ENCODE measurements at regions of chr4 and their contacts with region 1.

Region 1: DNA sequence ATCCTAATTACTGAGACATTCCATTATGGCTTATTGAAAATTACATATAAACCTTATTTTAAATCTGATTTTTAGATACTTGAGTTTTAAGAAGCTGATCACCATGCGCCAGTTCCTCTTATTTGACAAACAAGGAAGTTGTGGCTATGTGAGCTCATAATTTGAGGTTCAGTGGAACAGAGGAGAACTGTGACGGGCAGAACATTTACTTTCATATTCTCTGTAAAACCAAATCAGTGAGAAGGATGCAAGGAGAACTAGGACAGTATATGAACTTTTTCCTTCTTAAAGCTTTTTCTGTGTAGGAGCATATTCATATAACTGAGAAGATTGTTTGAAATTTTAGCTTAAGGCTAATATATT is 25.3 kb downstream of the STIM2 start:
- DNase-seq: peak in 4 of 5 donors; percentile 12 to 78 (median 72)
- H3K4me3 ChIP-seq: peak overlapping the region; percentile 52
- H3K4me3 Mint-ChIP-seq: peak overlapping the region; percentile 77 to 83 (median 79)
- H3K27ac ChIP-seq: peak overlapping the region; percentile 64
- H3K27ac Mint-ChIP-seq: peak overlapping the region; percentile 81 to 100 (median 96)
- H3K4me1 ChIP-seq: peaks cover 60% of the 10 kb centered on the region
- H3K4me1 Mint-ChIP-seq: peaks cover 67 to 96% (median 93%) of the 10 kb centered on the region in 3 donors
- H3K27me3 ChIP-seq: no peaks in the 10 kb centered on the region
- H3K27me3 Mint-ChIP-seq: no peaks in the 10 kb centered on the region

Region 2: GRCh38 chr4:26583865-26584652 is 301.8 kb before region 1 on chr4 and contains the start of gene TBC1D19:
- CTCF ChIA-PET with region 1: interaction called, 3 read pairs
- POLR2A ChIA-PET with region 1: interaction called, 13 read pairs
- DNase-seq: peak; percentile 71 to 90 (median 86)
- H3K4me3 ChIP-seq: peak within 1 kb of the TSS; percentile 87
- H3K4me3 Mint-ChIP-seq: peak within 1 kb of the TSS; percentile 96 to 100 (median 97)
- H3K27ac ChIP-seq: peak within 1 kb of the TSS; percentile 99
- H3K27ac Mint-ChIP-seq: peak within 1 kb of the TSS; percentile 97 to 100 (median 99)
- H3K4me1 ChIP-seq: peaks cover 12% of the 10 kb centered on the region
- H3K4me1 Mint-ChIP-seq: peaks cover 35 to 48% (median 42%) of the 10 kb centered on the region in 3 donors
- H3K27me3 ChIP-seq: no peaks in the 10 kb centered on the region
- H3K27me3 Mint-ChIP-seq: peaks cover 4 to 8% of the 10 kb centered on the region in 2 donors
- total RNA-seq, gene TBC1D19: 4.4 to 6.3 TPM

Region 3: DNA sequence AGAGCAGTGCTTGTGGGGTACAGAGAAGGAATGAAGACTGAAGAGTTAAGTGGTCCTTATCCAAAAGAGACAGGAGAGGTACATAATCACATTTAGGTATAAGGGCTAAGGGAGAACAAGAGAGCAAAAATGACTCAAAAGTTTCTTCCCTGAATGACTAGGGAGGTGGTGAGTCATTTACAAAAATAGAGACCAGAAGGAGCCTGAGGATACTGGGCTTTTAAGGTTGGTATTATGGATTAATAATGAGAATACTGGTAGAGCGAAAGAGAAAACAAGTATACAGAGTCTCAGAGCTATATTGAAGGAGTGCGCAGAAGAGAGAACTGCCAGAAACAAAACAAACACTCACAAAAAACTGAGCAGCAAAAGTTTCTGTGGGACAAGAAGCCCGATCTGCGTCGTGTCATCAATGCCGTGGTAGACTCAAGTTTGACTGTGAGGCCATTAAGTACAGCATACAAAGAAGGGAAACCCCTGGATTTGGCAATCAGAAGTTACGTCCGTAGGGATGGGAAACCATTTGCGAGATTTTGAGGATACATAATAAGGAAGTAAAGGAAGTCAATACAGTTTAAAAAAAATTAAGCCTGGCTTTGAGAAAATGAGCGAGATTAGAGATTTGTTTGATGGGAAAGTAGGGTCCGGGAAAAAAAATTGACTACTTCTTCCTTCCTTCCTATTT is 154.4 kb before region 1 on chr4:
- CTCF ChIA-PET with region 1: no interaction called
- POLR2A ChIA-PET with region 1: no interaction called
- DNase-seq: no peak
- H3K4me3 ChIP-seq: no peak overlapping the region
- H3K4me3 Mint-ChIP-seq: no peak overlapping the region
- H3K27ac ChIP-seq: no peak overlapping the region
- H3K27ac Mint-ChIP-seq: peak overlapping the region in 1 of 8 donors; percentile 25
- H3K4me1 ChIP-seq: no peaks in the 10 kb centered on the region
- H3K4me1 Mint-ChIP-seq: no peaks in the 10 kb centered on the region
- H3K27me3 ChIP-seq: no peaks in the 10 kb centered on the region
- H3K27me3 Mint-ChIP-seq: no peaks in the 10 kb centered on the region

Region 4: DNA sequence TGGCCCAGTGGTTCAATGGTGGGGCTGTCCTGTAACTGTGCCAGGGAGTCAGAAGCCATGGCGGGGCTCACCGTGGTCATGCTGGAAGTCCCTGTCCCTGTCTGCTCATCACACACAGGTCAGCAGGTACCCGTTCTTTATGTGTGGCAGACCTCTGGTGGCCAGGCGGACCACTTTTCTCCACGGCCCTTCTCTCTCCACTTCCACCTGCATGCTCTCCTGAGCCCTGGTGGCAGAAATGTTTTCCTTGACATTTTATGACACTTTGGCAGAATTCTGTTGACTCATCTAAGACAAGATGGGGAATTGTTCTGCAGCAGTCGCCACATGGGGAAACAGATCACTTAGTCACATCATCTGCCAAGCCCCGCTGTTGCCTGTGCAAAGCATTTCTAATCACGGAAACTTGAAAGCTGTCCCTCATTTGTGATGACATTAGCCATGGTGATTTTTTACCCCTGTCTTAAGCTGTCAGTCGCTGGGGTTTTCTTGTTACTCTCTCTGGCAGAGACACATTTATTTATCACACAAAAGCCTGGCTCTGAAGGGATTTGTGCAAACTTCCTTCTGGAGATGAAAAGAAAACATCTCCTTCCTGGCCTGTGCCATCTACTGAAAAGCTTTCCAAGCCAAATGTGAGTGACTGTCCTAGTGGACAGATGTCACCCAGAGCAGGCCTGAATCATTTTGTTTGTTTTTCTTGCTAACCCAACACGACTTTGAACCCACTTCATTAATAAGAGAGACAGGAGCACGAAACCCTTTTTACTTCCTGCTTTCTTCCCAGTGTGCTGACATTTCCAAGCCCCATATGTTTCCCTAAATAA is 64.0 kb before region 1 on chr4:
- CTCF ChIA-PET with region 1: no interaction called
- POLR2A ChIA-PET with region 1: no interaction called
- DNase-seq: no peak
- H3K4me3 ChIP-seq: no peak overlapping the region
- H3K4me3 Mint-ChIP-seq: peak overlapping the region in 1 of 7 donors; percentile 61
- H3K27ac ChIP-seq: no peak overlapping the region
- H3K27ac Mint-ChIP-seq: no peak overlapping the region
- H3K4me1 ChIP-seq: peaks cover 13% of the 10 kb centered on the region
- H3K4me1 Mint-ChIP-seq: peaks cover 17 to 23% (median 20%) of the 10 kb centered on the region in 3 donors
- H3K27me3 ChIP-seq: no peaks in the 10 kb centered on the region
- H3K27me3 Mint-ChIP-seq: no peaks in the 10 kb centered on the region

Region 5: DNA sequence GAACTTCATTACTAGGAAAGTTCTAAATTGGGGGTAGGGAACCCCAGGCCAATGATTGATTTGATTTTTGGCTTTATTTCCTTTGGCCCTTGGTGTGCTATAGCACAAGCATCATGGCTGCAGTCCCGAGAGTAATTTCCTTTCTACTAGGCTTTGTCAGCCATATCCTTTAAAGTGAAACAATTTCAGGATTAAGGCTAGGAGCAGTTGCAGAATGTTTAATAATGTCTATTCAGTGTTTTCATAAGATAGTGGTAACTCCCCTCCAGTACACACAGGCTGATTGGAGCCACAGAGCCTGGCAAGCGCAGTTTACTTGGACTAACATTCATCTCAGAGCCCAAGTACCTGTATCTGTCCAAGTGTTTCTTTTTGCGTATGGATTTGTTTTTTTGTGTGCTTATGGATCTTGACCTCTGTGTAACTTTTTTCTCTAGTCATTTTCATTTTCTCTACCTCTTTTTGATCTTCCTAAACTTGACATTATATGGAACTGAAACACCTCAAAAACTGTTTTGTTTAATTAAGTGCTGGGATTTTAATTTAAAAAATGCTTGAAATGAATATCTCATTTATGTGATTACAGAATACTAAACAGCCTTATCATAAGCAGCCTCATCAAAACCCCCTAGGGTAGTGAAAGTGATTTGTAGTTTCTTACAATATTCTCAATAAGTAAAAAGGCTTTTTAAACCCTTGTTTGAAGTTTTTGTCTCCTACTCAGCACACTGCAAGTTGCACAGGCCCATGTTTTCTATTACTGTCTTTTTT is 17.8 kb before region 1 on chr4:
- CTCF ChIA-PET with region 1: interaction called, 20 read pairs
- POLR2A ChIA-PET with region 1: interaction called, 12 read pairs
- DNase-seq: no peak
- H3K4me3 ChIP-seq: no peak overlapping the region
- H3K4me3 Mint-ChIP-seq: peak overlapping the region in 6 of 7 donors; percentile 15 to 71 (median 46)
- H3K27ac ChIP-seq: no peak overlapping the region
- H3K27ac Mint-ChIP-seq: peak overlapping the region; percentile 8 to 89 (median 30)
- H3K4me1 ChIP-seq: peaks cover 86% of the 10 kb centered on the region
- H3K4me1 Mint-ChIP-seq: peaks cover 85 to 92% (median 91%) of the 10 kb centered on the region in 3 donors
- H3K27me3 ChIP-seq: no peaks in the 10 kb centered on the region
- H3K27me3 Mint-ChIP-seq: no peaks in the 10 kb centered on the region

Region 6: GRCh38 chr4:26873391-26874026 is 12.4 kb before region 1 on chr4:
- CTCF ChIA-PET with region 1: interaction called, 20 read pairs
- POLR2A ChIA-PET with region 1: interaction called, 11 read pairs
- DNase-seq: peak; percentile 61 to 90 (median 69)
- H3K4me3 ChIP-seq: no peak overlapping the region
- H3K4me3 Mint-ChIP-seq: peak overlapping the region; percentile 53 to 86 (median 72)
- H3K27ac ChIP-seq: peak overlapping the region; percentile 65
- H3K27ac Mint-ChIP-seq: peak overlapping the region; percentile 88 to 99 (median 96)
- H3K4me1 ChIP-seq: peaks cover 70% of the 10 kb centered on the region
- H3K4me1 Mint-ChIP-seq: peaks cover 83 to 94% (median 93%) of the 10 kb centered on the region in 3 donors
- H3K27me3 ChIP-seq: no peaks in the 10 kb centered on the region
- H3K27me3 Mint-ChIP-seq: no peaks in the 10 kb centered on the region

Region 7: GRCh38 chr4:26907731-26908599 is 22.1 kb after region 1 on chr4:
- CTCF ChIA-PET with region 1: no interaction called
- POLR2A ChIA-PET with region 1: no interaction called
- DNase-seq: no peak
- H3K4me3 ChIP-seq: no peak overlapping the region
- H3K4me3 Mint-ChIP-seq: peak overlapping the region in 1 of 7 donors; percentile 18
- H3K27ac ChIP-seq: no peak overlapping the region
- H3K27ac Mint-ChIP-seq: peak overlapping the region in 1 of 8 donors; percentile 31
- H3K4me1 ChIP-seq: peaks cover 52% of the 10 kb centered on the region
- H3K4me1 Mint-ChIP-seq: peaks cover 70 to 93% (median 78%) of the 10 kb centered on the region in 3 donors
- H3K27me3 ChIP-seq: no peaks in the 10 kb centered on the region
- H3K27me3 Mint-ChIP-seq: no peaks in the 10 kb centered on the region

Measured in CD8-positive, alpha-beta memory T cell (primary cell).